CD14-positive monocyte (primary cell): ENCODE measurements at regions of chr19 and their contacts with region 1.

Region 1: GRCh38 chr19:35013031-35013819 is 13.1 kb downstream of the GRAMD1A start:
- DNase-seq: peak; percentile 56 to 85 (median 67)
- H3K4me3 ChIP-seq: peak overlapping the region in 1 of 3 experiments; percentile 70
- H3K4me3 Mint-ChIP-seq: peak overlapping the region; percentile 48 to 91
- H3K27ac ChIP-seq: peak overlapping the region; percentile 78 to 88
- H3K27ac Mint-ChIP-seq: peak overlapping the region; percentile 86 to 97 (median 90)
- H3K4me1 ChIP-seq: peaks cover 68 to 77% of the 10 kb centered on the region in 2 donors
- H3K4me1 Mint-ChIP-seq: peaks cover 68% of the 10 kb centered on the region
- H3K27me3 ChIP-seq: no peaks in the 10 kb centered on the region
- H3K27me3 Mint-ChIP-seq: peaks cover 0 to 3% (median 0%) of the 10 kb centered on the region in 3 donors
- CTCF ChIP-seq: peak; percentile 97

Region 2: DNA sequence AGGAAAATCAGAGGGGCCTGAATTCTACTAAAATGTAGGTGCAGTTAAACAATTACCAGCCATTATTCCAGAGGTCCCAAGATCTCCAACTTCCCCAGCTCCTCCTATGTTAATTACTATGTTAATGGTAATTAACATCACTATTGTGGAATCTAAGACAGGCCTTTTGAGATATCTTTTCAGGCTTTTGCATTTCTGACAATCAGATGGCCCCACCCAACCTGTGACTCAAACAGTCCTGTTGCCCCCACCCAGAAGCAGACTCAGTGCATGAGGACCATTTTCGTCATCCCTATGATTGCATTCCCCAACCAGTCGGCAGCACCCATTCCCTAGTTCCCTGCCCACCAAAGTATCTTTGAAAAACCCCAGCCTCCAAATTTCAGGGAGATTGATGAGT is 95.0 kb before region 1 on chr19:
- intact Hi-C with region 1: no loop called
- DNase-seq: no peak
- H3K4me3 ChIP-seq: no peak overlapping the region
- H3K4me3 Mint-ChIP-seq: no peak overlapping the region
- H3K27ac ChIP-seq: no peak overlapping the region
- H3K27ac Mint-ChIP-seq: no peak overlapping the region
- H3K4me1 ChIP-seq: no peaks in the 10 kb centered on the region
- H3K4me1 Mint-ChIP-seq: peaks cover 7% of the 10 kb centered on the region
- H3K27me3 ChIP-seq: no peaks in the 10 kb centered on the region
- H3K27me3 Mint-ChIP-seq: no peaks in the 10 kb centered on the region
- CTCF ChIP-seq: no peak

Region 3: GRCh38 chr19:34974646-34975045 is 38.6 kb before region 1 on chr19:
- intact Hi-C with region 1: loop called (anchors 1 to 5 kb)
- DNase-seq: peak; percentile 11 to 91 (median 83)
- H3K4me3 ChIP-seq: peak overlapping the region in 1 of 3 experiments; percentile 57
- H3K4me3 Mint-ChIP-seq: peak overlapping the region in 1 of 2 donors; percentile 62
- H3K27ac ChIP-seq: peak overlapping the region in 1 of 2 donors; percentile 59
- H3K27ac Mint-ChIP-seq: peak overlapping the region; percentile 80 to 97 (median 94)
- H3K4me1 ChIP-seq: peaks cover 34 to 39% of the 10 kb centered on the region in 2 donors
- H3K4me1 Mint-ChIP-seq: peaks cover 40% of the 10 kb centered on the region
- H3K27me3 ChIP-seq: no peaks in the 10 kb centered on the region
- H3K27me3 Mint-ChIP-seq: peaks cover 2 to 3% (median 2%) of the 10 kb centered on the region in 3 donors
- CTCF ChIP-seq: no peak

Region 4: DNA sequence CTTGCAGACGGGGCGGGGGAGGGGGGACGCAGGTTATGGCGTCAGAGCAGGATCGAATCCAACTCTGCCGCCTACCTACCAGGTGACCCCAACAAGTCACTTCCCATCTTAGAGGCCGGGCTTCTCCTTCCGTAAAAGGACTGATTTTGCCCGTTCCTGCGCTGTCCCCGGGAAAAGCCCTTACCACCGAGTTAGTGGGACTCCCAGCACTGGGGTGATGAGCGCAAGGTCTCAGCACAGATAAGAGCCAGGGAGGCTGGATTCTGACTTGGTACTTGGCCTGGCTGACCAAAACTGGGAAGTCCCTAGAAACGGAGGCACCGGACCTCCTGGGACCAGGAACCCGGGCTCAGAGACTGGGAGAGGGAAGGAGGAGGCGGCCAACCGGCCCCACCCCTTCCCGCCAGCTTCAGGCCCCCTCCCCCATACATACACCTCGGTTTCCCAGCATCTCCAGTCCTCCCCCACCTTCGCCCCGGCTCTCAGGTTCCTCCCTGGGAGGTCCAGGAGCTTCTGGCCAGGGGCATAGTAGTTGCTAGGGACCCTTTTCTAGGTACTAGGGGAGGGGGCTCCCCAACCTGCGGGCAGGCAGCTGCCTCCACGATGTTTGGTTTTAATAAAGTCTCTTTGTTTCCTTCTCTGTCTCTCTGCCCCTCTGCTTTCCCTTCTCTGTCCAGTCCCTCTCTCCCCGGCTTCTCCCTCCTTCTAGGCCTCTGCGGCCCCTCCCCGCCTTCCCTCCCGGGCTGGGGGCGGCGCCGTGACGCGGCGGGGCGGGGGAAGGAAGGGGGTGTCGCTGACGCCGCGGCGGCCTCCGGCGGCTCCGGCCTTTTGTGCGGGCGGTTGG is 13.5 kb before region 1 on chr19 and contains the start of gene GRAMD1A:
- intact Hi-C with region 1: no loop called
- DNase-seq: peak; percentile 67 to 90 (median 80)
- H3K4me3 ChIP-seq: peak within 1 kb of the TSS; percentile 60 to 81 (median 77)
- H3K4me3 Mint-ChIP-seq: peak within 1 kb of the TSS; percentile 93 to 98
- H3K27ac ChIP-seq: peak within 1 kb of the TSS; percentile 93 to 95
- H3K27ac Mint-ChIP-seq: peak within 1 kb of the TSS; percentile 92 to 98 (median 96)
- H3K4me1 ChIP-seq: peaks cover 74 to 75% of the 10 kb centered on the region in 2 donors
- H3K4me1 Mint-ChIP-seq: peaks cover 70% of the 10 kb centered on the region
- H3K27me3 ChIP-seq: no peaks in the 10 kb centered on the region
- H3K27me3 Mint-ChIP-seq: peaks cover 0 to 7% (median 1%) of the 10 kb centered on the region in 3 donors
- CTCF ChIP-seq: no peak
- polyA plus RNA-seq, gene GRAMD1A: 9.3 to 73.9 (median 15.1) TPM